Posterior vena cava (tissue), 2 donors: ENCODE measurements at regions of chr16 and their contacts with region 1.

Region 1: DNA sequence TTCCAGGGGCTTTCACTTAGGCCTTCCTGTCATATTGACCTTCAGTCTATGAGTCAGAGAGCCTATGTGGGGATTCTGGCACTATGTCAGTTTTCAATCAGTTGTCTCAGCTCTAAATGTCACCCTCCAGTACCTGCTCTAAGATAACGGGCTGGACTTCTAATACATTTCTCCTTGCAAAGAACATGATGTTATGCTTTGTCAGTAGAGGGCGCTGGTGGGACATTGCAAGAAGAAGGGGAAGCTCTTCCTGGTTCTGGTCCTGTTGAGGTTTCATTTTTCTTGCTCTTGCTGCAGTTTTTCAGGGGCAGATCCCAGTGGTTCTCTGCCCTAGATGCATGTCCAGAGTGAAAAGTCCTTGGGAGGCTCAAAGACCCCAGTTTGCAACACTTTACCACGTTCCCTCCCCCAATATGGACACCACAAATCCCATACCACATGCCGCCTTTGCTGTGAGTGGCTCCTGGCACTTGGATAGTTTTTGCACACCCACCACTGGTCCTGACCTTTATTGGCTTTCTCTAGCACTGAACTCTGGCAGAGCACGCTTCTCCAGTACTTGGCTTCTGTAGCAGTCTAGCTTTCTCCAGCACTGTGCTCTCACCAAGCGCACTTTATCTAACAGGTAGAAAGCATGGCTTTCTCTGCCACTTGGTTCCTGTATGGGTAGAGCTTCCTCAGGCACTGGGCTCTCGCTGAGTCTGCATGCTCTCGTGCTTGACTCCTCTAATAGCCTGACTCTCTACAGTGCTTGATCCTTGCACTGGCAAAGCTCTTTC is 49.0 kb downstream of the BCL7C start:
- DNase-seq: no peak

Region 2: DNA sequence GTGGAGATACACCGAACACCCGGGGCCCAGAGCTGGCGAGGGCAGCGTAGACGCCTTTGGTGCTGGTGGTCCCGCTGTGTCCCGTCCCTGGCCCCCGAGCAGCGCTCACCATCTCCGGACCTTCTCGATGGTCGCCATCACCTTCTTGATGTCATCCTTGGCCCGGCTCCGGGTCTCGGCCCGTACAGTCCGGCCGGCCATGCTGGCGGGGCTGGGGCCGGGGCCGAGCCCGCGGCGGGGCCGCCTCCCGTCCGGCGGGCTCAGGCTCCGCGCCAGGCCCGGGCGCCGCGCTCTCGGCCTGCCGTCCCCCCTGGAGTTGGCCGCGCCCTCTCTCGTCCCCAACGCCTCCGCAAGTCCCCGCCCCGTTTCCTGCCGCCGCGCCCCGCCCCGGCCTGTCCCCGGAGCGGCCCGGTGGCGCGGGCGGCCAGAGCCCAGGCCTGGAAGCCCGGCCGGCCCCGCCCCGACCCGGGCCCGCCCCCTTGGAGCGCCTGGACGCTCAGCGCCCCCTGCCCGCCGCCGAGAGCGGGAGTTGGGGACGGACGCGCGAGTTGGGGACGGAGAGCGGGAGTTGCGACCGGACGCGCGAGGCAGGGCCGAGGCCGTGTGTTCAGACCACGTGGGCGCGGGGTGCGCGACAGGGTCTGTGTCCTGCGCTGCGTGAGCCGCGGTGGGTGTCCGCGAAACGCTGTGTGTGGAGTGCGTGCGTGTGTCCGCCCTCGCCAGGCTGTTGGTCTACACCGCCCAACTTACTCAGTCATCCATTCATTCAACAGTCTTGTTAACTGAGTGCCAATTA is 49.1 kb after region 1 on chr16 and contains the start of gene BCL7C:
- intact Hi-C with region 1: loop called in 1 of 2 experiments (anchors 2 kb)
- DNase-seq: peak; percentile 96
- total RNA-seq, gene BCL7C: 33.6 to 36.3 TPM

Region 3: DNA sequence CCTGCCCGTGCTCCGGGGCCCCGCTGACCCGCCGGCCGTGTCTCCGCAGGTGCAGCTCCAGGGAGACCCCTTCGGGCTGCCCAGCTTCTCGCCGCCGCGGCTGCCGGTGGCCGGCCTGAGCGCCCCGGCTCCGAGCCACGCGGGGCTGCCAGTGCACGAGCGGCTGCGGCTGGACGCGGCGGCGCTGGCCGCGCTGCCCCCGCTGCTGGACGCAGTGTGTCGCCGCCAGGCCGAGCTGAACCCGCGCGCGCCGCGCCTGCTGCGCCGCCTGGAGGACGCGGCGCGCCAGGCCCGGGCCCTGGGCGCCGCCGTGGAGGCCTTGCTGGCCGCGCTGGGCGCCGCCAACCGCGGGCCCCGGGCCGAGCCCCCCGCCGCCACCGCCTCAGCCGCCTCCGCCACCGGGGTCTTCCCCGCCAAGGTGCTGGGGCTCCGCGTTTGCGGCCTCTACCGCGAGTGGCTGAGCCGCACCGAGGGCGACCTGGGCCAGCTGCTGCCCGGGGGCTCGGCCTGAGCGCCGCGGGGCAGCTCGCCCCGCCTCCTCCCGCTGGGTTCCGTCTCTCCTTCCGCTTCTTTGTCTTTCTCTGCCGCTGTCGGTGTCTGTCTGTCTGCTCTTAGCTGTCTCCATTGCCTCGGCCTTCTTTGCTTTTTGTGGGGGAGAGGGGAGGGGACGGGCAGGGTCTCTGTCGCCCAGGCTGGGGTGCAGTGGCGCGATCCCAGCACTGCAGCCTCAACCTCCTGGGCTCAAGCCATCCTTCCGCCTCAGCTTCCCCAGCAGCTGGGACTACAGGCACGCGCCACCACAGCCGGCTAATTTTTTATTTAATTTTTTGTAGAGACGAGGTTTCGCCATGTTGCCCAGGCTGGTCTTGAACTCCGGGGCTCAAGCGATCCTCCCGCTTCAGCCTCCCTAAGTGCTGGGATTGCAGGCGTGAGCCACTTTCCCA is 57.4 kb after region 1 on chr16:
- intact Hi-C with region 1: loop called in 1 of 2 experiments (anchors 5 kb)
- DNase-seq: peak; percentile 92

Region 4: DNA sequence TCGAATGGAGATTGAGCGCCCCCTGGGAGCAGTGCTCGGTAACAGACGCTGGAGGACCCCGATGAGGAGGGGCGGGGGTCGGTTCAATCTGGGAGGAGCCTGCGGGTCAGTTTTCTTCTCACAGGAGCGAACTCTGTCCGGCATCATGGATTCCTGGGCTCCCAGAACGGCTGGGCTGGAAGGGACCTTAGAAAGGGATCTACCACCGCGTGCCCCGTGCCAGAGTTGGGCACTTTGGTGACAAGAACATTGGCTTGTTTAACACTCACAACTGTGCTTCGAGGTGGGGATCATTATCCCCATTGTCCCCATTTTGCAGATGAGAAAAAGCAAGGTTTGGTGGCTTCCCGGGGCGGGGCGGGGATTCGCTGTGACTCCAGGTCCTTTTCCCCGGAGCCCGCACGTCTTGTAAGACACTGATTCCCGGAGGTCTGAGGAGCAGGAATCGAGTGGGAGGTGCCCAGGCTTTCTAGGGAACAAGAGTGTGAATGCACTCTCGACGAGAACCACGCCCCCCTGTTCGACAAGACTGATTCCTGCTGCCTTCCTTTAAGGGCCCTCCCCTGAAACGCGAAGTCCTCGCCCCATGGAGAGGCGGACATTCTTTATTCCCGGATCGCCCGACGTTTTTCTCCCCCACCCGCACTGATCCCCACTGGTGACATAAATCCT is 77.0 kb after region 1 on chr16:
- intact Hi-C with region 1: loop called in 1 of 2 experiments (anchors 2 kb)
- DNase-seq: peak; percentile 97